PC-3 (cell line): ENCODE measurements at regions of chr2 and their contacts with region 1.

Region 1: DNA sequence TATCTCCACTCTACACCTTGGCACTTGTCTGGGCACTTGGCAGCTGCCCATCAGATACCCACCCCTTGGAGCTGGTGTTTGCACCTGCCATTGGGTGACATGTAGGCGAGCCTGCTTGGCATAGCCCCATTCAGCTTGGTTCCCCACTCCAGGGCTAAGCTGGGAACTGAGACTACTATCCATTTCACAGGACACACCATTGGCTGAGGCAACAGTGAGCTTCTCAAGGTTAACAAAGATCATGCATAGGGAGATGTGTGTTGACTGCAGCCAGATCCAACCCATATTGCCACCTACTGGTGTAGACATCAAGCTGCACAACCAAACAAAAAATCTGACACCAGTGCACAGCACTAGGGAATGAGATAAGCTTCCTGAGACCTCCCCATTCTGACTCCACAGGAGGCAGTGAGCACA is 1389.8 kb upstream of the TMEFF2 start:
- DNase-seq: peak; percentile 62
- ATAC-seq: peak; percentile 90
- H3K4me3 ChIP-seq: no peak overlapping the region
- H3K27ac ChIP-seq: no peak overlapping the region
- H3K4me1 ChIP-seq: no peaks in the 10 kb centered on the region
- H3K27me3 ChIP-seq: no peaks in the 10 kb centered on the region
- CTCF ChIP-seq: peak; percentile 75

Region 2: DNA sequence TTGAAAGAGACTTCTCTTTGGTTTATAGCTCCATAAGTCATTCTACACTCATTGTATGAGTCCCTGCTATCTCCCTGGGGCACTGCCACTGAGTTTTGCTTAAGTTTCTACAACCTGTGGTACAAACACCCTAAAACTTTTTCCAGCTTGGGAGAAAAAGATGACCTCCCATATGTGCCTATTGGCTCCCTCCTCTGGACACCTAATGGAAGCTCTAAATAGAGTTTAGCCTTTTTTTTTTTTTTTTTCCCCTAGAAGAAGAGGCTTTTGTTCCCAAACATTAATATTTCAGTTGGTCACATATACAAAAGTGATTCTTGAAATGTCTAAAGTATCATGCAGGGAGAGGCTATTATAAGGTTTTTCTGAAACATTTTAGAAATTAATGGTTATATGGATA is 842.6 kb before region 1 on chr2:
- CTCF ChIA-PET with region 1: no interaction called
- POLR2A ChIA-PET with region 1: no interaction called
- intact Hi-C with region 1: loop called (anchors 2 kb)
- DNase-seq: peak; percentile 30
- ATAC-seq: peak; percentile 24; the same call in 1 of the 2 replicates
- H3K4me3 ChIP-seq: no peak overlapping the region
- H3K27ac ChIP-seq: no peak overlapping the region
- H3K4me1 ChIP-seq: no peaks in the 10 kb centered on the region
- H3K27me3 ChIP-seq: no peaks in the 10 kb centered on the region
- CTCF ChIP-seq: peak; percentile 59

Region 3: GRCh38 chr2:192828947-192829346 is 755.6 kb before region 1 on chr2:
- CTCF ChIA-PET with region 1: no interaction called
- POLR2A ChIA-PET with region 1: no interaction called
- intact Hi-C with region 1: no loop called
- DNase-seq: no peak
- ATAC-seq: no peak
- H3K4me3 ChIP-seq: no peak overlapping the region
- H3K27ac ChIP-seq: no peak overlapping the region
- H3K4me1 ChIP-seq: no peaks in the 10 kb centered on the region
- H3K27me3 ChIP-seq: no peaks in the 10 kb centered on the region
- CTCF ChIP-seq: no peak

Region 4: GRCh38 chr2:193111529-193111928 is 473.0 kb before region 1 on chr2:
- CTCF ChIA-PET with region 1: no interaction called
- POLR2A ChIA-PET with region 1: no interaction called
- intact Hi-C with region 1: loop called (anchors 1 kb)
- DNase-seq: no peak
- ATAC-seq: no peak
- H3K4me3 ChIP-seq: no peak overlapping the region
- H3K27ac ChIP-seq: no peak overlapping the region
- H3K4me1 ChIP-seq: no peaks in the 10 kb centered on the region
- H3K27me3 ChIP-seq: no peaks in the 10 kb centered on the region
- CTCF ChIP-seq: no peak

Region 5: DNA sequence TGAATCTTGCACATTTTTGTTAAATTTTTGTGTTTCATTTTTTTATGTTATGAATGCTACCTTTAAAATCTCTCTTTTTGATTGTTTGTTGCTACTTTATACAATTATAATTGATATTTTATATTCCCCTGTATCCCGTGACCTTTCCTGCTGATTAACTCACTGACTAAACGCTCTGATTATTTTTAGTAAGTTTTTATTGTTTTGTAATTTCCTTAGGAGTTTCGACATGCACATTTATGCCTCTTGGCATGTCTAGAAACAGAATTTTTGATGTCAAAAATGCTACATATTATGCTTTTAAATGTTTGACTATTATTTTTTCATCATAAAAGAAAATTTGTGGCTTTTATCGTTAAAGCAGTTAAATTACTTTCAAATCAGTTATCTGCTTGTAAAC is 258.2 kb before region 1 on chr2:
- CTCF ChIA-PET with region 1: no interaction called
- POLR2A ChIA-PET with region 1: no interaction called
- intact Hi-C with region 1: loop called (anchors 10 kb)
- DNase-seq: no peak
- ATAC-seq: no peak
- H3K4me3 ChIP-seq: no peak overlapping the region
- H3K27ac ChIP-seq: no peak overlapping the region
- H3K4me1 ChIP-seq: no peaks in the 10 kb centered on the region
- H3K27me3 ChIP-seq: no peaks in the 10 kb centered on the region
- CTCF ChIP-seq: no peak